Left cardiac atrium (tissue), 4 donors: ENCODE measurements at regions of chr13 and their contacts with region 1.

Region 1: DNA sequence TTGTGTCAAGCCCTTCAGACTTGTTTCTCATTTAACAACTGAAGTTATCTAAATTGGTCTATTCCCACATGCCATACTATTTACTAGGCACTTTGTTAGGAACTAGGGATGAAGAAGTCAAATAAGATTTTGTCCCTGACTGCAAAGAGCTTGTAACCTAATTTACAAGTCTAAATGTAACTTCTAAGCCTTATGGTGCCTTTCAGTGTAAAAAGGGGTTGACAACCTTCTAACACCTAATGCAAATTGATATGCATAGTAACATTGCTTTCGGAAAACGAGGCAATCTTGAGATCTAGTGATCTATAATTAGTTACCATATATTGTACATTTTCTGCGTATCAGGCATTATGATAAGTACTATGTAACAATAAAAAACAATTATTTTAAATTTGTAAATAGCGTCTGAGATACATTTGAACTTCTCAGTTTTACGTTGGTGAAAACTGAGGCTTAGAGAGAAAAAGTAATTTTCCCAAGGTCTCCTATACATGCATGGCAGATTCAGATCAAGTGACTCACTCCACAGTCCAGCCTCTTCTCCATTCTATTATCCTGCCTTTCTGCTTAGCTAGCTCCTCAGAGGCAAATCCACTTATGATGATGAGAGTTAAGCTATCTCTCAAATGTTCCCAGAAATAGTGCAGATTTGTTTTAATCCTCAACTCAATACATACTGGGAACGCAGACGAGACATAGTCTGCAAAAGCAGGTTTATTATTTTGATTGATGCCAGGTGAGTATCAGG is 764.9 kb upstream of the SLITRK5 start:
- DNase-seq: no peak
- ATAC-seq: no peak

Region 2: GRCh38 chr13:86932776-86933334 is 26.6 kb after region 1 on chr13:
- intact Hi-C with region 1: no loop called
- DNase-seq: no peak
- ATAC-seq: no peak

Region 3: GRCh38 chr13:86960876-86961275 is 54.6 kb after region 1 on chr13:
- intact Hi-C with region 1: loop called in 1 of 2 experiments (anchors 10 kb)
- DNase-seq: no peak
- ATAC-seq: no peak